Transverse colon (tissue), 4 donors: ENCODE measurements at regions of chr1 and their contacts with region 1.

Region 1: DNA sequence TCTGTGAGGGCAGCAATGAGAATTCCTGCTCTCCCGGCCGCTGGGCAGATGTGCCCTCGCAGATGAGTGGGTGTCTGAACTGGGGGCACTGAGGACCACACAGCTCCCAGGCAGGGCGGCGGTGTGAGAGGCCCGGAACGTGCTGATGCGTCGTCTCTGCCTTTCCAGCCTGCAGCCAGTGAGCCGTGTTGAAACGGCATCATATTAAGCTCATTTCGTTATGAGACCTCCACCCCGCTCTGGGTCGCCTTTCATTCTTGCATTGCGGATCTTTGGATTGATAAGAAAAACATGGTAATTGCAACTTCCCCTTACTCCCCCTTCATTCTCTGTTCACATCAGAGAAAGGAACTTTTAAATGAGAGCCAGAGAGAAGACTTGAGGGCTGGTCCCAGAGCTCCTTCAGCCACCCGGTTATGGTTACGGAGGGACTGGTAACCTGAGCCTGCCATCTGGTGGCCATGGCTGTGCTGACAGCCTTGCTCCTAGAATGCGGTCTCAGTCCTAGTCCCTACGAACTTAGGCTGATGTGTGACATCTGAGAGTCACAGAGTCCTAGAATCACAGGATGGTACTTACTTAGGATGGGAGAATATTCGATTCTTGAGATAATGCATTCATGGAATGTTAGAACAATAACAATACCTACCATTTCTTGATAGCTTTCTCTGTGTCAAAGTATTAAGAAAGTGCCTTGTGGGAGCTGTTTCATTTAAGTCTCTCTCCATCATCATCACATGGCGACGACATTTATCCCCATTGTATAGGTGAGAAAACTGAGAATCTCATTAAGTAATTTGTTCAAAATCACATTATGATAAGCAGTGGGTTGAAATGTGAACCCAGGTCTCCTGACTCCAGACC is 271.0 kb downstream of the TRABD2B start:
- DNase-seq: peak; percentile 90
- H3K4me3 ChIP-seq: peak overlapping the region in 2 of 4 donors; percentile 6 to 15
- H3K27ac ChIP-seq: peak overlapping the region; percentile 66 to 80 (median 76)
- H3K4me1 ChIP-seq: peaks cover 12 to 51% (median 38%) of the 10 kb centered on the region in 4 donors
- H3K27me3 ChIP-seq: peaks cover 15% of the 10 kb centered on the region
- CTCF ChIP-seq: peak; percentile 82 to 93 (median 87)
- EP300 ChIP-seq: no peak
- POLR2A ChIP-seq: no peak

Region 2: GRCh38 chr1:48061162-48062136 is 335.2 kb after region 1 on chr1:
- in situ Hi-C with region 1: loop called in 1 of 4 experiments (anchors 25 kb)
- intact Hi-C with region 1: no loop called
- DNase-seq: peak; percentile 43
- H3K4me3 ChIP-seq: no peak overlapping the region
- H3K27ac ChIP-seq: no peak overlapping the region
- H3K4me1 ChIP-seq: no peaks in the 10 kb centered on the region
- H3K27me3 ChIP-seq: no peaks in the 10 kb centered on the region
- CTCF ChIP-seq: peak; percentile 54 to 65 (median 58)
- EP300 ChIP-seq: no peak
- POLR2A ChIP-seq: no peak

Region 3: GRCh38 chr1:48202030-48202752 is 476.0 kb after region 1 on chr1:
- in situ Hi-C with region 1: loop called in 1 of 4 experiments (anchors 25 kb)
- intact Hi-C with region 1: no loop called
- DNase-seq: peak; percentile 72
- H3K4me3 ChIP-seq: no peak overlapping the region
- H3K27ac ChIP-seq: no peak overlapping the region
- H3K4me1 ChIP-seq: peaks cover 0 to 3% (median 0%) of the 10 kb centered on the region in 4 donors
- H3K27me3 ChIP-seq: peaks cover 4% of the 10 kb centered on the region
- CTCF ChIP-seq: peak; percentile 67 to 80 (median 75)
- EP300 ChIP-seq: no peak
- POLR2A ChIP-seq: no peak